ENCODE measurements at regions of chr6 and their contacts with region 1.

Region 1: DNA sequence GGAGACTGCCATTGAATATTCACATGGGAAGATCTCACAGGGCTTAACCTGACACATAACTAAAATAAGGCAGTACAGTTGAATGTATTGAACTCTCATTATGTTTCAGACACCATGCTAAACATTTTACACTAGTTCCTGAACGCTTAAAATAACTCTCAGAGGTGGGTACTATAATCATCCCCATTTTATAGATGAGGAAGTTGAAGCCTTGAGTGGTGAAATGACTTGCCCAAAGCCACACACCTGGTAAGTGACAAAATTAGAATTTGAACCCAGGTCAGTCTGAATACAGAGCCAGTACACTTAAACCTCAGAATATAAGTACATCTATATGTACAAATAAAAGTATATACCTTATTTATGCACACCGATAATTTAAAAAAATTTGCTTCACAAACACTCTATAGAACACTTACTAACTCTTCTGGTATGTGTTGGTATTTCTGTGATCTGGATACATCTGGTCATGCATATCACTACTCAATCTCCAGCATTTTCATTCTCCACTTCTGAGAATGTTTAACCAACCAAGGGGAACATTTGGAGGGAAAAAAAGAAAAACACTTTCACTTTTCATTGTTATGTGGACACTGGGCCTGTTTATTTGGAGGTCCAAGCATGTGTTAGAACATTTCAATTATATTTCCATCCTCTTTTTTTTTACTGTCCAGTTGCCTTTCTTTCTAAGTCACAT is 4.6 kb upstream of the BICRAL start:
- DNase-seq: no peak
- H3K4me3 Mint-ChIP-seq: no peak overlapping the region
- H3K27ac Mint-ChIP-seq: peak overlapping the region; percentile 50
- H3K4me1 Mint-ChIP-seq: peaks cover 68% of the 10 kb centered on the region
- H3K27me3 Mint-ChIP-seq: no peaks in the 10 kb centered on the region

Region 2: DNA sequence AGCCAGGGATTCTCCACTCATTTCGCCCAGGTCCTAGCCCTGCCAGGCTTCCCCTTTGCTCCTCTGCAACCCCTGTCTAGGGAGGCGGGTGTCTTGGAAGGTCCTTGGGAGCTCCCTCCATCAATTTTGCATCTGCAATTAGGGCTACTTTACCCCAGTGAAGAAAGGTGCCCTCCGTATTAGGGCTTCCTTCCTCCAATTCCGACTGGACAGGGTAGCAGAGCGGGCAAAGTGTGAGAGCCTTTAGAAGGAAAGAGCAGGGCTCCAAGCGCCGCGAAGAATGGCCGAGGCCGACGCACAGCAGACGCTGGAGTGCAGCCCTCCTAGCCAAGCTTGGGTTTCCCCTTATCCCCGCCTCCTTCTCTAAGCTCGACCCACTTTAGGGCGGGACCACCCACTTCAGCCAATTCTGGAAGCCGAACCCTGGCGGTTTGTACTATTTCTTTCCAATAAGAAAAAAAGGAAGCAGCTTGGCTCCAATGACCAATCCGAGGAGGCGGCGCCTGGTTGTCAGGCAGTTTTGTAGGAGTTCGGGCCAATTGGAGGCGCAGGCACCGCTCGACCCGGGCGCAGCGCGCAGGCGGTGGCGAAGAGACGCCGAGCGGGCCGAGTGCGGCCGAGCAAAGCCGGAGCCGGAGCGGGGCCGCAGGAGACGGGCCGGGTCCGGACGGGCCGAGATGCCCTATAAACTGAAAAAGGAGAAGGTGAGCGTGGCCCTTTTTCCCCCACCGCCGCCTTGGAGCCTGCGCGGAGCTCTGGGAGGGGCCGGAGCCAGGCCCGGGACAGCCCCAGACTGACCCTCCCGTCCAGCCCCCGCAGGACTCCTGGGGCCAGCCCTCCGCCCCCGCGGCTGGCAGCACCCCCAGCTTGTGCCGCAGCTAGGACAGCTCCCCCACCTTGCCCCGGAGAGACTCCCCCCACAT is 207.0 kb after region 1 on chr6 and contains the start of gene PPP2R5D:
- CTCF ChIA-PET with region 1: no interaction called
- intact Hi-C with region 1: loop called (anchors 10 kb)
- DNase-seq: peak; percentile 99
- H3K4me3 Mint-ChIP-seq: peak within 1 kb of the TSS; percentile 93
- H3K27ac Mint-ChIP-seq: peak within 1 kb of the TSS; percentile 81
- H3K4me1 Mint-ChIP-seq: peaks cover 51% of the 10 kb centered on the region
- H3K27me3 Mint-ChIP-seq: no peaks in the 10 kb centered on the region
- total RNA-seq, gene PPP2R5D: 52.4 to 54.4 TPM

Region 3: DNA sequence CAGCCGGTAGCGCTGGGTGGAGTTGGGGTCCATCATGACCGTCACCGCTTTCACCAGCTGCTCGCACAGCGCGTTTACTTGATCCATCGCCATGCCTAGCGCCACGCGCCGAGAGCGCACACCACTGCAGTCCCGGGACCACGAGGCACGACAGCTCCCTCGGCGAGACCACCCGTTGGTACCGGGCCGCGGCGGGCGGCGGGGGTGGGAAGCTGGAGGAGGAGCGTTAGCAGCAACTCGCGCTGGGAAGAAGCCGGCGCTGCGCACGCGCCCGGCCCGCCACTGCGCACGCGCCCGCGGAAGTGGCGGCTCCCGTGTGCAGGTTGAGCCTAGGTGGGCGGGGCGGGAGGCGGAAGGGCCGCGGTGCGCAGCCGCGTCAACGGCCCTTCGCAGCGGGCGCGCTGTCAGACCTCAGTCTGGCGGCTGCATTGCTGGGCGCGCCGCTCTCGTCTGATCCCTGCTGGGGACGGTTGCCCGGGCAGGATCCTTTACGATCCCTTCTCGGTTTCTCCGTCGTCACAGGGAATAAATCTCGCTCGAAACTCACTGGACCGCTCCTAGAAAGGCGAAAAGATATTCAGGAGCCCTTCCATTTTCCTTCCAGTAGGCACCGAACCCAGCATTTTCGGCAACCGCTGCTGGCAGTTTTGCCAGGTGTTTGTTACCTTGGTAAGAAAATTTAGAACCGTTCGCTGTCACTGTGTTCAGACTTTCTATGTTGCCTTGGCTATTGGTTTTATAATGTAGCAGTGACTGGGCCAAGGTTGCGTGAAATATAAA is 798.7 kb after region 1 on chr6 and contains the starts of genes POLH and XPO5:
- CTCF ChIA-PET with region 1: no interaction called
- intact Hi-C with region 1: loop called (anchors 10 kb)
- DNase-seq: peak; percentile 92
- H3K4me3 Mint-ChIP-seq: peak within 1 kb of the TSS; percentile 93
- H3K27ac Mint-ChIP-seq: peak within 1 kb of the TSS; percentile 87
- H3K4me1 Mint-ChIP-seq: peaks cover 48% of the 10 kb centered on the region
- H3K27me3 Mint-ChIP-seq: no peaks in the 10 kb centered on the region
- total RNA-seq, gene POLH: 63.3 to 68.6 TPM
- total RNA-seq, gene XPO5: 74.9 to 93.2 TPM

Measured in activated naive CD4-positive, alpha-beta T cell treated with anti-CD3 and anti-CD28 coated beads for 36 hours (primary cell).